K562 (cell line): ENCODE measurements at regions of chr4 and their contacts with region 1.

Region 1: GRCh38 chr4:168076989-168077725 is 15.2 kb upstream of the ANXA10 start:
- DNase-seq: peak; percentile 26 to 50 (median 32)
- ATAC-seq: 0 out of 3 replicates have a peak, but pooled peaks have one; percentile 47
- H3K4me3 ChIP-seq: no peak overlapping the region
- H3K27ac ChIP-seq: no peak overlapping the region
- H3K4me1 ChIP-seq: no peaks in the 10 kb centered on the region
- H3K27me3 ChIP-seq: no peaks in the 10 kb centered on the region
- CTCF ChIP-seq: peak; percentile 49 to 65 (median 64)
- EP300 ChIP-seq: no peak
- POLR2A ChIP-seq: no peak
- RAD21 ChIP-seq: peak; percentile 55 to 73

Region 2: GRCh38 chr4:166165829-166166420 is 1911.2 kb before region 1 on chr4:
- CTCF ChIA-PET with region 1: no interaction called
- POLR2A ChIA-PET with region 1: no interaction called
- in situ Hi-C with region 1: no loop called
- intact Hi-C with region 1: loop called (anchors 1 kb)
- DNase-seq: peak; percentile 34 to 65 (median 39)
- ATAC-seq: peak; percentile 86
- H3K4me3 ChIP-seq: no peak overlapping the region
- H3K27ac ChIP-seq: no peak overlapping the region
- H3K4me1 ChIP-seq: no peaks in the 10 kb centered on the region
- H3K27me3 ChIP-seq: no peaks in the 10 kb centered on the region
- CTCF ChIP-seq: peak; percentile 33 to 73 (median 60); a peak in 5 of 6 replicates
- EP300 ChIP-seq: no peak
- POLR2A ChIP-seq: no peak
- RAD21 ChIP-seq: peak; percentile 69 to 77

Region 3: DNA sequence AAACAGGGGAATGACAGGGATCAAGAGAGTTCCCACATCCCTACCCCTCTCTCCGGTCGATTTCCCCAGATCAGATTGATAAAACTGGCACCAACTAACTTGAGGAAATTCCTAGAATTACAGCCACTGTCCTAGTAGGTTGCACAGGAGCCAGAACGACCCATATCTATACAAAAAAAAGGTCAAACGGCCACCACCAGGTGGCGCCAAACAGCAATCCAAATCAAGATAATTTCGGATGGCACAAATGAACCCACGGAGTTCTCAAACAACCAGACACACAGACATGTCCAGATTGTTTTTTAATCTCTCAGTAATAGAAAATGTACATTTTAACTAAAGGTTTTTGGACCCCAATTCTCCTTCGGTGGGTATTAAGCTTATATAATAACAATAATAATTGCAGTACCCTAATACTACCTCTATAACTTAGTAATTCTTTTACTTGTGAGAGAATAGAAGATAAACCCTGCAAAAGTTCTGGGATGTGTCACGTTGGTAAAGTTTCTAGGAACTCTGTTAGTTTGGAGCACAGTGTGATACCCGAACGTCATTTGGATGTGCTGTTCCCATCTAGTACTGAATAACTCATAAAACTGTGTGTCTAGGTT is 1055.5 kb before region 1 on chr4:
- CTCF ChIA-PET with region 1: no interaction called
- POLR2A ChIA-PET with region 1: no interaction called
- in situ Hi-C with region 1: no loop called
- intact Hi-C with region 1: loop called (anchors 1 kb)
- DNase-seq: peak; percentile 12 to 68 (median 18)
- ATAC-seq: peak; percentile 50; the same call in 1 of the 3 replicates
- H3K4me3 ChIP-seq: no peak overlapping the region
- H3K27ac ChIP-seq: no peak overlapping the region
- H3K4me1 ChIP-seq: no peaks in the 10 kb centered on the region
- H3K27me3 ChIP-seq: no peaks in the 10 kb centered on the region
- CTCF ChIP-seq: peak; percentile 38 to 65 (median 58); a peak in 5 of 6 replicates
- EP300 ChIP-seq: no peak
- POLR2A ChIP-seq: no peak
- RAD21 ChIP-seq: peak; percentile 32 to 48; a peak in 3 of 4 replicates

Region 4: GRCh38 chr4:167622481-167623246 is 454.5 kb before region 1 on chr4:
- CTCF ChIA-PET with region 1: no interaction called
- POLR2A ChIA-PET with region 1: no interaction called
- in situ Hi-C with region 1: no loop called
- intact Hi-C with region 1: loop called (anchors 10 kb)
- DNase-seq: peak; percentile 17 to 50 (median 29)
- ATAC-seq: 0 out of 3 replicates have a peak, but pooled peaks have one; percentile 45
- H3K4me3 ChIP-seq: no peak overlapping the region
- H3K27ac ChIP-seq: no peak overlapping the region
- H3K4me1 ChIP-seq: no peaks in the 10 kb centered on the region
- H3K27me3 ChIP-seq: no peaks in the 10 kb centered on the region
- CTCF ChIP-seq: peak; percentile 36 to 58 (median 41)
- EP300 ChIP-seq: no peak
- POLR2A ChIP-seq: no peak
- RAD21 ChIP-seq: peak in 1 of 2 experiments; percentile 15; a peak in 2 of 4 replicates

Region 5: GRCh38 chr4:167775375-167775774 is 301.8 kb before region 1 on chr4:
- CTCF ChIA-PET with region 1: no interaction called
- POLR2A ChIA-PET with region 1: no interaction called
- in situ Hi-C with region 1: no loop called
- intact Hi-C with region 1: no loop called
- DNase-seq: no peak
- ATAC-seq: no peak
- H3K4me3 ChIP-seq: no peak overlapping the region
- H3K27ac ChIP-seq: no peak overlapping the region
- H3K4me1 ChIP-seq: no peaks in the 10 kb centered on the region
- H3K27me3 ChIP-seq: no peaks in the 10 kb centered on the region
- CTCF ChIP-seq: no peak
- EP300 ChIP-seq: no peak
- POLR2A ChIP-seq: no peak
- RAD21 ChIP-seq: no peak